ENCODE measurements at regions of chr2 and their contacts with region 1.

Region 1: GRCh38 chr2:80499095-80499494 is 194.5 kb upstream of the LRRTM1 start:
- DNase-seq: no peak
- H3K4me3 ChIP-seq: no peak overlapping the region
- H3K27ac ChIP-seq: no peak overlapping the region
- H3K4me1 ChIP-seq: no peaks in the 10 kb centered on the region
- H3K27me3 ChIP-seq: no peaks in the 10 kb centered on the region
- CTCF ChIP-seq: peak; percentile 78

Region 2: GRCh38 chr2:80073134-80073561 is 425.9 kb before region 1 on chr2:
- intact Hi-C with region 1: loop called (anchors 5 kb)
- DNase-seq: no peak
- H3K4me3 ChIP-seq: no peak overlapping the region
- H3K27ac ChIP-seq: no peak overlapping the region
- H3K4me1 ChIP-seq: no peaks in the 10 kb centered on the region
- H3K27me3 ChIP-seq: peaks cover 31% of the 10 kb centered on the region
- CTCF ChIP-seq: peak; percentile 70

Region 3: DNA sequence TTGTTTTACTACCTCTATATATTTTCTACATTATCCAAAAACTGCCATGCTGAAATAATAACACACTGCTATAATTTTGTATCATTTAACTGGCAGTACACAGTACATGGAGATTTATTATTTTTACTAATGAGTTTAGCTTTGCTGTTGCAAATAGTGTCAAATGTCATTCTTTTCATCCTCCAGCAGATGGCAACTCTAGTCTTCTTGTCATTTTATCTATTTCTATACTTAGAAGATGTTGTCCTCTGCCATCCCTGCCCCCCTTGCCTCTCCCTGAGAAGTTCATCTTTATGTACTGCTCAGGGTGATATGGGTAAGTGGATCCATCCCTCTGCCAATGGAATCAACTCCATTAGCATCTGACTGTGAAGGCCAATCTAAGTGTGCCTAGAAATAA is 172.9 kb before region 1 on chr2:
- intact Hi-C with region 1: loop called (anchors 1 kb)
- DNase-seq: no peak
- H3K4me3 ChIP-seq: no peak overlapping the region
- H3K27ac ChIP-seq: no peak overlapping the region
- H3K4me1 ChIP-seq: peaks cover 9% of the 10 kb centered on the region
- H3K27me3 ChIP-seq: peaks cover 32% of the 10 kb centered on the region
- CTCF ChIP-seq: peak; percentile 78